Stomach (tissue), 19 donors: ENCODE measurements at regions of chr2 and their contacts with region 1.

Region 1: DNA sequence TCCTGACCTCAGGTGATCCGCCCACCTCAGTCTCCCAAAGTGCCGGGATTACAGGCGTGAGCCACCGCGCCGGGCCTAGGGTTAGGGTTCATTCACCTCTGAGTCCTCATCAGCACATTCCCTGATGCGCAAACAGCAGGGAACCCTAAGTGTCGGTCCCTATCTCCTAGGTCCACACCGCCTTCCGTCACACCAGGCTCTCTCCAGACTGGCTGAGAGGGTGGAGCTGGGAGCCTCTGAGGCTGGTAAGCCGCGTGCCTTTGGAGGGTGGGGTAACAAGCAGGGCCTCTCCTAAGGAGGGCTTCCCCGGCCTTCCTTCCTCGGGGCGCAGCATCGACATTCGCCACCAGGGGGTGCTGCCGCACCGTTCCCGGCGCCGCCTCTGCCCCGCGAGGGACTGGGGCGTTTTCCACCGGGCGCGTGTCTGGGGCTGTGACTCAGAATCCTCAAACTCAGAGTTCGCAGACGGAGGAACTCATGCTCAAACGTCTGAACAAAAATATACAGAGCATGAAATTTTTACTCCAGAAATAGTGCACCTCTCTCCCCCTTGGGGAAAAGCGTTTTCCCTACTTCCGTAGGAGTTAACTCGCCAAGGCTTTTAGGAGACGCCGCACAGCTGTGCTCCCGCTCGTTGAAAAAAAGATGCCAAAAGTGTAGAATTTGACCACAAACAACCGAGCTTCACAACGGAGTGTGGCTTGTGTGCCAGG is 63.9 kb upstream of the ASAP2 start:
- DNase-seq: peak; percentile 89 to 95
- H3K4me3 ChIP-seq: peak overlapping the region; percentile 8 to 32 (median 24)
- H3K27ac ChIP-seq: peak overlapping the region in 4 of 5 donors; percentile 52 to 73 (median 56)
- H3K4me1 ChIP-seq: peaks cover 10 to 56% (median 29%) of the 10 kb centered on the region in 4 donors
- H3K27me3 ChIP-seq: no peaks in the 10 kb centered on the region
- CTCF ChIP-seq: peak in 6 of 7 experiments; percentile 82 to 99 (median 98)
- EP300 ChIP-seq: no peak
- POLR2A ChIP-seq: no peak

Region 2: DNA sequence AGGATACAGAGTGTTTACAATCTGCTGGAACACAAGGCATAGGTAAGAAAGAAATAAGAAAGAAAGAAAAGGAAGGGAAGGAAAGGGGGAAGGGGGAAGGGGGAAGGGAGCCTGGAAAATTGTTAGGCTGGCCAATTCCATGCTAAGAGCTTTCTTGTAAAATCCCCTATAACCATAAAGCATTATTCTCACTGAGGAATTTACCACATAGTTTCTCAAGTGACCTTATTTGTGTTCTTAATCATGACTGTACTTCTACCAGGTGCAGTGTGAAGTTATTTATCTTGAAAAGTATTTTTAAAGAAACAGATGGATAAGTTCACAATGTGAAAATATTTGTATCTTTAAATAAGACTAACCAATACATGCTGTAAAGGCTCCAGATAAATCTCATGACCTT is 266.1 kb before region 1 on chr2:
- intact Hi-C with region 1: loop called (anchors 5 kb)
- DNase-seq: no peak
- H3K4me3 ChIP-seq: no peak overlapping the region
- H3K27ac ChIP-seq: no peak overlapping the region
- H3K4me1 ChIP-seq: peaks cover 0 to 4% (median 0%) of the 10 kb centered on the region in 4 donors
- H3K27me3 ChIP-seq: no peaks in the 10 kb centered on the region
- CTCF ChIP-seq: no peak
- EP300 ChIP-seq: no peak
- POLR2A ChIP-seq: no peak

Region 3: DNA sequence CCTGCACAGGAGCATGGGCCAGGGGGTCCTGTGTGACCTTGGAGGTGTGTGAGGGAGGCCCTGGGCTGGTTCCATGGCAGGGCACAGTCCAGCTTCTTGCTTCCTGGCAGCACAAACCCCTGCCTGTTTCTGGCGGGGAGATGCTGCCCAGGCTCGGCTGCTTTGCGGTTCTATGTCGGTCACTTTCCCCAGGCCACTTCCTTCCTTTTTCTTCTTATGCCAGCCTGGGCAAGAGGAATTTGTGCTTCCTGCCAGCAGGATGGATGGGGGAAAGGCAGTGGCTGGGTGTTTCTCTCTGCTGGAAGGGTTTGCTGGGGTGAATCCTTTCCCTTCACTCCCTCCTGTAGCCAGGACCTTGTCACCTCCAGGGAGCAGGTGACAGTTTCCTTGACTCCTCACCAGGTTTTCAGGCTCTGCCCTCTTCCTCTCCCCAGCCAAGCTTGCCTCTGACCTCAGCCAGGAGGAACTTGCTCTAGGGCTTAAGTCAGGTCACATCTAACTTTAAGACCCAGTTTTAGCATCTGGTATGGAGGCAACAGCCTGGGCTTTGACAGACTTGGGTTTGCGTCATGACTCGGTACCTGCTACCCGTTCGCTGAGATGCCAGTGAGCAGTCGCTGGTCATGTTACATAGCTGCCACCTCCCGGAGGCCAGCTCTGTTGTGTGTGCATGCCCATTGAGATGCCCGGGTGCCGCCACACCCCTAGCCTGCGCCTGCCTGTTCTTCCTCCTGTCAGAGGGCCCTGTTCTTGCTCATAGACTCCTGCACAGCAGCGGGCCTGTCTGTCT is 88.4 kb after region 1 on chr2:
- intact Hi-C with region 1: no loop called
- DNase-seq: peak in 1 of 2 donors; percentile 50
- H3K4me3 ChIP-seq: no peak overlapping the region
- H3K27ac ChIP-seq: peak overlapping the region in 4 of 5 donors; percentile 8 to 65 (median 61)
- H3K4me1 ChIP-seq: peaks cover 58 to 97% (median 77%) of the 10 kb centered on the region in 4 donors
- H3K27me3 ChIP-seq: no peaks in the 10 kb centered on the region
- CTCF ChIP-seq: no peak
- EP300 ChIP-seq: no peak
- POLR2A ChIP-seq: no peak

Region 4: DNA sequence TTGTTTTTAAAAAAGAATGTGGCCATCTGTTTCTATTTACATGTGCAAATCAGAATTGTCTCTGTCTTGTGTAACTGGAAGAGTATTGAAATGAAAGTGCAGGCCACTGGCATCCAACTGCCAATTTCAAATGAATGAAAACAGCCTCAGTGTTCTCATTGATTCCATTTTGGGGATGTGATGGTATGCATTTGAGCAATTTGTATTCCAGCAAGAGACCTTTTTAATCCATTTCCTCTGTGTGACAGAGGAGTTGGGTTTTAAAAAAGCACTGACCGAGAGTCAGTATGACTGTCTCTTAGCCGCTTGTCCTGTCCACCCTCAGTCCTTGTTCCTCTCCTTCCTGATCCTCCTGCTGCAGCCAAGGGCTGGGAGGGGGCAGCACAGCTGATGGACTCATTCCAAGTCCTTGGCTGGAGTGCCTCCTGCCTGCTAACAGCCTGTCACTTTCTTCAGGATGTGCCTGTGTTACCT is 113.9 kb after region 1 on chr2:
- intact Hi-C with region 1: no loop called
- DNase-seq: no peak
- H3K4me3 ChIP-seq: no peak overlapping the region
- H3K27ac ChIP-seq: peak overlapping the region in 1 of 5 donors; percentile 1
- H3K4me1 ChIP-seq: peaks cover 43 to 70% (median 56%) of the 10 kb centered on the region in 4 donors
- H3K27me3 ChIP-seq: no peaks in the 10 kb centered on the region
- CTCF ChIP-seq: no peak
- EP300 ChIP-seq: no peak
- POLR2A ChIP-seq: no peak

Region 5: GRCh38 chr2:9333591-9334171 is 191.0 kb after region 1 on chr2:
- intact Hi-C with region 1: loop called (anchors 5 kb)
- DNase-seq: peak; percentile 71 to 92
- H3K4me3 ChIP-seq: no peak overlapping the region
- H3K27ac ChIP-seq: peak overlapping the region in 2 of 5 donors; percentile 35 to 37
- H3K4me1 ChIP-seq: peaks cover 12 to 47% (median 31%) of the 10 kb centered on the region in 4 donors
- H3K27me3 ChIP-seq: no peaks in the 10 kb centered on the region
- CTCF ChIP-seq: peak in 5 of 7 experiments; percentile 38 to 74 (median 56)
- EP300 ChIP-seq: no peak
- POLR2A ChIP-seq: no peak